ENCODE measurements at regions of chr7 and their contacts with region 1.

Region 1: DNA sequence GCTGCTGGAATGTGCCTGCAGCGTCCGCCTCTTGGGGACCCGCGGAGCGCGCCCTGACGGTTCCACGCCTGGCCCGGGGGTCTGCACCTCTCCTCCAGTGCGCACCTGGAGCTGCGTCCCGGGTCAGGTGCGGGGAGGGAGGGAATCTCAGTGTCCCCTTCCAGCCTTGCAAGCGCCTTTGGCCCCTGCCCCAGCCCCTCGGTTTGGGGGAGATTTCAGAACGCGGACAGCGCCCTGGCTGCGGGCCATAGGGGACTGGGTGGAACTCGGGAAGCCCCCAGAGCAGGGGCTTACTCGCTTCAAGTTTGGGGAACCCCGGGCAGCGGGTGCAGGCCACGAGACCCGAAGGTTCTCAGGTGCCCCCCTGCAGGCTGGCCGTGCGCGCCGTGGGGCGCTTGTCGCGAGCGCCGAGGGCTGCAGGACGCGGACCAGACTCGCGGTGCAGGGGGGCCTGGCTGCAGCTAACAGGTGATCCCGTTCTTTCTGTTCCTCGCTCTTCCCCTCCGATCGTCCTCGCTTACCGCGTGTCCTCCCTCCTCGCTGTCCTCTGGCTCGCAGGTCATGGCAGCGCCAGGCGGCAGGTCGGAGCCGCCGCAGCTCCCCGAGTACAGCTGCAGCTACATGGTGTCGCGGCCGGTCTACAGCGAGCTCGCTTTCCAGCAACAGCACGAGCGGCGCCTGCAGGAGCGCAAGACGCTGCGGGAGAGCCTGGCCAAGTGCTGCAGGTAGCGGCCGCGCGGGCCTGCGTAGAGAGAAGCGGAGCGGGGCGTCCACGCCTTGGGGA is 645 bp downstream of the SLC26A4 start:
- DNase-seq: peak; percentile 72
- ATAC-seq: peak; percentile 65
- H3K4me3 Mint-ChIP-seq: peak overlapping the region; percentile 95
- H3K27ac Mint-ChIP-seq: peak overlapping the region; percentile 83
- H3K4me1 Mint-ChIP-seq: peaks cover 27% of the 10 kb centered on the region
- H3K27me3 Mint-ChIP-seq: peaks cover 10% of the 10 kb centered on the region

Region 2: GRCh38 chr7:107563775-107564552 is 97.3 kb before region 1 on chr7 and contains the starts of genes COG5 and DUS4L:
- POLR2A ChIA-PET with region 1: interaction called, 11 read pairs
- DNase-seq: peak; percentile 89
- ATAC-seq: peak; percentile 85
- H3K4me3 Mint-ChIP-seq: peak within 1 kb of the TSS; percentile 93
- H3K27ac Mint-ChIP-seq: peak within 1 kb of the TSS; percentile 95
- H3K4me1 Mint-ChIP-seq: peaks cover 54% of the 10 kb centered on the region
- H3K27me3 Mint-ChIP-seq: no peaks in the 10 kb centered on the region
- total RNA-seq, gene COG5: 51.0 to 56.2 TPM
- total RNA-seq, gene DUS4L: 10.1 to 11.8 TPM

Region 3: DNA sequence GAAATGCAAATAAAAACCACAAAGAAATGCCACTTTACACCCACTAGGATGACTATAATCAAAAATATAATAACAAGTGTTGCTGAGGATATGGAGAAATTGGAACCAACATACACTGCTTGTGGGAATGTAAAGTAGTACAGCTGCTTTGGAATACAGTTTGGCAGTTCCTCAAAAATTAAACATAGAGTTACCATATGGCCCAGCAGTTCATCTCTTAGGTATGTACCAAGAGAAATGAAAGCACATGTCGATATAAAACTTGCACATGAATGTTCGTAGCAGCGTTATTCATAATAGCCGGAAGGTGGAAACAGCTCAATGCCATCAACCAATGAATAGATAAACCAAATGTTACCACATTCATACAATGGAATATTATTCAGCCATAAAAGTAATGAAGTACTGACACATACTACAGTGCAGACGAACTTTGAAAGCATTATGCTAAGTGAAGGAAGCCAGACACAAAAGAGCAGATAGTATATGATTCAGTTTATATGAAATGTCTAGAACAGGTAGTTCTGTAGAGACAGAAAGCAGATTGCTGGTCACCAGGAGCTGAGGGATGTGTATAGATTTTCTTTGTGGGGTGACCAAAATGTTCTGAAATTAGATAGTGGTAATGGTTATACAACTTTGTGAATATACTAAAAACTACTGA is 68.8 kb before region 1 on chr7:
- POLR2A ChIA-PET with region 1: no interaction called
- DNase-seq: no peak
- ATAC-seq: no peak
- H3K4me3 Mint-ChIP-seq: no peak overlapping the region
- H3K27ac Mint-ChIP-seq: no peak overlapping the region
- H3K4me1 Mint-ChIP-seq: no peaks in the 10 kb centered on the region
- H3K27me3 Mint-ChIP-seq: no peaks in the 10 kb centered on the region

Region 4: DNA sequence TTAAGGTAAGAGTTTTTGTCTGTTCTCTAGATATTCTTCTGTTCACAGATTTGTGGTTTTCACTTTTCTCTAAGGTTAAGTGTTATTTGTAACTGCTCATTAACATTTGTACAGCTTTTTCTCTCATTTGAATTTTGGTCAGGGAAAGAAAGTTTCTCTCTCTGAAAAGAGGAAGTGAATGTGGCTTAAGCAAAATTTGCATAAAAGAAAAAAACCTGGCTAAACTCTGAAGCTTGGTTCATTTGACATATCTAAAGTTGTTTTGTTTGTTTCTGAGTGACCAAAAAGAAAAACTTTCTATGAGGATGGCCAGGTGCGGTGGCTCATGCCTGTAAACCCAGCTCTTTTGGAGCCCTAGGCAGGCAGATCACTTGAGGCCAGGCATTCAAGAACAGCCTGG is 22.7 kb before region 1 on chr7:
- POLR2A ChIA-PET with region 1: no interaction called
- DNase-seq: no peak
- ATAC-seq: peak; percentile 58
- H3K4me3 Mint-ChIP-seq: peak overlapping the region; percentile 70
- H3K27ac Mint-ChIP-seq: peak overlapping the region; percentile 75
- H3K4me1 Mint-ChIP-seq: peaks cover 35% of the 10 kb centered on the region
- H3K27me3 Mint-ChIP-seq: peaks cover 4% of the 10 kb centered on the region

Measured in activated naive CD8-positive, alpha-beta T cell treated with anti-CD3 and anti-CD28 coated beads, Interleukin-2, amount 10 ng/mL, durations not matched to agents 7 days and 5 days (primary cell).